A549 (cell line): ENCODE measurements at regions of chr13 and their contacts with region 1.

Region 1: DNA sequence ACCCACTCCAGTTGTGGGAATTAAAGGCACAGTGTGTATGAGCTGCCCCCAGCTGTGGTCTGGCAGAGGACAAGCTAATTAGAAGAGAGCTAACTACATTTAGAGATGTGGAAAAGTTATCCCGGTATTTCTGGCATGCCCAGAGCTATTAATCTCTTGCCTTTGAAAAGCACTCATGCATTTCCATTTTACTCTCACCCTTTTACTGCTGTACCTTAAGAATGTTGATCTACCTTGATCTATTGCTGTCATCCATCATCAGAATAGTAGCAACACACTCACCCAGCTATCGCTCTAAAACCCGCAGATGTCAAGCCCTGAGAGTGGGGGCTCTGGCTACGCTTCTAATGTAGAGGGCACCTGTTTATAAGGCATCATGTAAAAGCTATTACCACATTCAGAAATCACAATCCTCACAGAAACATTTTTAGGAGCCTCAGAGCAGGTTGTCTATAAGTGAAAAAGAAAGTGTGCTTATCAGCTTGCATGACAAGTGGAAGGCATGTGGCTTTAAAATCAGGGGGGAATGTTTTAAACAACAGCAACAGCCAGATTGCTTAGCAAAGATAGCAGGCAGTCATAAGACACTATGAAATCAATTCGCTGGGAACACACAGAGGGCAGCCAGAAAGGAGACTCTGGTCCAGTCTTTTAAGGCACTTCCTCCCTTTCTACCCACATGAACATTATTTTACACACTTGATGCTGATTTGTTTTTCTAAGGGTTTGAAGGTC is 224.2 kb upstream of the IRS2 start:
- DNase-seq: no peak
- ATAC-seq: no peak
- H3K4me3 ChIP-seq: no peak overlapping the region
- H3K27ac ChIP-seq: peak overlapping the region; percentile 90 to 91; a peak in 5 of 6 replicates
- H3K4me1 ChIP-seq: peaks cover 53% of the 10 kb centered on the region
- CTCF ChIP-seq: no peak
- EP300 ChIP-seq: no peak
- POLR2A ChIP-seq: no peak
- RAD21 ChIP-seq: no peak

Region 2: DNA sequence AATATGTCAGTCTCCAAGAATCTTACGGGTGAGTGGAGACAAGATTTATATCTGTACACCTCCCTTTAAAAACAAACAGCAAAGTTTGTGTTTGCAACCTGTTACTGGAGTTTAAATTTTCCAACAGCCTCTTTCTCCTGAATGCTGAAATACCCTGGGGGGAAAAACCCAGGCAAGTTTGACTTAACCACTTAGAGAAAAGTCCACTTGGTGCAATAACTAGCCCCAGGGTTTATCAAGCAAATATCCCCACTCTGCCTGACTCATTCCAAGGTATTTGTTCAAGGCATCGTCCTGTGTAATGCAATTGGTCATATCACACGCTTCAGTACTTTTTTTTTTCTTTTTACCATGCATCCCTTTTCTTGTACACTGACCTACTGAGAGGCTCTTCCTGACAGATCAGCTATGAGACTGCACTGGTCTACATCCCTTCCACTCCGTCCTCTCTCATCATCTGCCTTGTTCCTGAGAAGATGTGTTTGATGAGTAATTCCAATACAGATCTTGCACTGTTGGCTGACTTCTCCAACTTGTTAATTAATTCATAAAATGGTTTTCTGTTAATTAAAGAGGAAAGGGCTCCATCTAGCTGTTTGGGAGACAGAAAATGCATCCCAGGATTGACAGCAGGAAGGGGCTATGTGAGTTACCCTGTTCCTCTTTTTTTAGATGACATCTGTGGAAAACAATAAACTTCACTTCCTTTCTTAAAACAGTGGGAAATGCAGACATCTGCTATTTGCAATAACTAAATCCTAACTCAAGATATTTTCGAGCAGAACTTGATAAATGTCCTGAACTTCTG is 11.6 kb before region 1 on chr13:
- CTCF ChIA-PET with region 1: interaction called, 12 read pairs
- POLR2A ChIA-PET with region 1: no interaction called
- DNase-seq: peak; percentile 80 to 89
- ATAC-seq: peak; percentile 96 to 97
- H3K4me3 ChIP-seq: no peak overlapping the region; the same call in 2 of the 3 replicates
- H3K27ac ChIP-seq: peak overlapping the region; percentile 53 to 80; a peak in 5 of 6 replicates
- H3K4me1 ChIP-seq: peaks cover 46% of the 10 kb centered on the region
- CTCF ChIP-seq: no peak; the same call in 1 of the 3 replicates
- EP300 ChIP-seq: peak in 1 of 2 experiments; percentile 64; a peak in 2 of 5 replicates
- POLR2A ChIP-seq: no peak
- RAD21 ChIP-seq: peak; percentile 36 to 54; a peak in 3 of 5 replicates

Region 3: DNA sequence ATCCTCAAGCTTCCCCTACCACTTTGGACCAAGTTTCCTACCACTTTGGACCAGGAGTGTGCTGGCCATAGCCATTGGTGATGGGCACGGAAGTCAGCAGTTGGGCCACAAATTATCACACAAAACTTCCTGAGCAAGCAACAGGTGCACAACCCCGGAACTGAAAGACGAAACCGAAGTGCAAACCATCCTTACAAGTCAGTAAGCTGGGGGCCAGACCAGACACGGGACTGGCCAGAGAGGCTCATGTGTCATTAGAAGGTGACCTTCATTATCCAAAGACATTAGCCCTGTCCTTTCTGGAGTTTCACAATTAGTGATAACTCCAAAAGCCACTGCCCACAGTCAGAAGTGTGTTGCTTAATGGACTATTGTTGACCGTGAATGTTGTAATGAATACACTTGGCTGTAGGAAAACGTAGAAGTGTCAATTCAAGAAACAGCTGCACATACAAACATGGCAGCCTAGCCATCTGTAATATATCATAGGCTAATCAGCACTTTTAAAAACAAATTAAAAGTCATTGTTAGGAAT is 19.9 kb after region 1 on chr13:
- CTCF ChIA-PET with region 1: no interaction called
- POLR2A ChIA-PET with region 1: no interaction called
- DNase-seq: no peak
- ATAC-seq: no peak
- H3K4me3 ChIP-seq: no peak overlapping the region
- H3K27ac ChIP-seq: no peak overlapping the region
- H3K4me1 ChIP-seq: no peaks in the 10 kb centered on the region
- CTCF ChIP-seq: no peak
- EP300 ChIP-seq: no peak
- POLR2A ChIP-seq: no peak
- RAD21 ChIP-seq: no peak